Mammary epithelial cell (primary cell): ENCODE measurements at regions of chr19 and their contacts with region 1.

Region 1: DNA sequence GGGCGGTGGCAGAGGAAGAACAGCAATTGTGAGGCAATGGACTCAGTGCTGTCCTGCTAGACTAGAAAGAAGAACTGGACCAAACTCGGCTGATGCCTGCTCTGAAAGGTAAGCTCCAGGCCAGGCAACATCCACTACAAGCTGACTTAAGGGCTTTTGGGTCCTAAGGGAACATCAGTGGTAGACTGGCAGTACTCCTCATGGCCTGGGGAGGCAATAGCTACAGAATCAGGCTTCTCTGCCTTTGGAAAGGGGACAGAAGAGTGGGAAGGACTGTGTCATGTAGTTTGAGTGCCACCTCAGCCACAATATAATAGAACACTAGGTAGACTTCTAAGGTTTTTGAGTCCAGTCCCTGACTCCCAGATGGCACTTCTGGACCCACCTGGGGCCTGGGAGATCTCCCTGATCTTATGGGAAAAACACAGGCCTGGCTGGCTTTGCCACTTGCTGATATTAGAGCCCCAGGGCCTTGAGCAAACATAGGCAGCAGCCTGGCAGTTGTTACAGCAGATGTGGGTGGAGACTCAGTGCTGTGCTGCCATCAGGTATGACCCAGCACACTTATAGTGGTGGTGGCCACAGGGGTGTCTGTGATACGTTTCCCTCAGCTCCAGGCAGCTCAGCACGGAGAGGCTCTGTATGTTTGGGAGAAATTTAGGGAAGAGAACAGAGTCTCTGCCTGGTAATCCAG is 9.2 kb upstream of the CLC start:
- DNase-seq: no peak
- H3K4me3 ChIP-seq: no peak overlapping the region
- H3K27ac ChIP-seq: no peak overlapping the region
- H3K4me1 ChIP-seq: no peaks in the 10 kb centered on the region
- H3K27me3 ChIP-seq: no peaks in the 10 kb centered on the region
- CTCF ChIP-seq: no peak

Region 2: GRCh38 chr19:39780894-39781293 is 33.9 kb after region 1 on chr19:
- CTCF ChIA-PET with region 1: interaction called, 3 read pairs
- dilution Hi-C with region 1: loop called (anchors 5 kb)
- in situ Hi-C with region 1: no loop called
- intact Hi-C with region 1: no loop called
- DNase-seq: no peak
- H3K4me3 ChIP-seq: no peak overlapping the region
- H3K27ac ChIP-seq: no peak overlapping the region
- H3K4me1 ChIP-seq: no peaks in the 10 kb centered on the region
- H3K27me3 ChIP-seq: peaks cover 6% of the 10 kb centered on the region
- CTCF ChIP-seq: no peak